ENCODE measurements at regions of chr1 and their contacts with region 1.

Region 1: GRCh38 chr1:110005971-110006370 is 21.4 kb downstream of the AHCYL1 start:
- DNase-seq: no peak
- H3K4me3 ChIP-seq: no peak overlapping the region
- H3K27ac ChIP-seq: no peak overlapping the region
- H3K4me1 ChIP-seq: peaks cover 9 to 25% (median 19%) of the 10 kb centered on the region in 4 experiments; a peak in 6 of 7 replicates
- H3K27me3 ChIP-seq: no peaks in the 10 kb centered on the region
- CTCF ChIP-seq: no peak
- EP300 ChIP-seq: no peak
- POLR2A ChIP-seq: no peak
- RAD21 ChIP-seq: no peak

Region 2: DNA sequence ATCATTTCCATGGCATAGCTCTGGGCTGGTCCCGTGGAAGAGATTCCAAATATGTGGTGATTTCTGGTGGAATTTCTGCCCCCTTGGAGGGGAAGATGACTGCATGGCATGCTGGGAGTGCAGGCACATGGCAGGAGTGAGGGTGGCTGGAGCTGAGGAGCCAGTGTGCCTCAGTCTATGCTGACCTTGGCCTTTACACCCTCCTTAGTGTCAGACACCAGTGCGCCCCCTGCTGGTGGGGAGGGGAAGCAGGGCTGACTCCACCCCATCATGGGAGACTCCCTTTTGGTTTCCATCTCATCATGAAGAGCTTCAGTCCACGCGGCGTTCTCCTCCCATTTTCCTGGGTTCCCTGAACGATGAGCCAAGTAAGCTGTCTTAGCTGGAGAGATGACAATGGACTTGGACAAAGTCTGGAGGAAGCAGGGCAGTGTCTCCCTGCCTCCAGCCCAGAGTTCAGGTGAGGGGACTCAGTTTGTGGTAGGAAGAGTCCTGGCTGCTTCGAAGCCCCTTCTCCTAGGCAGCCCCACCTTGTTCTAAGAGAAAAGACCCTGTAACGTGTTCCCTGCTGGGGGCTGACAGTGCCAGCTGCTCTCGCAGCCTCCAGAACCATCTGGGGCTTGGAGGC is 54.2 kb after region 1 on chr1:
- CTCF ChIA-PET with region 1: interaction called, 10 read pairs
- POLR2A ChIA-PET with region 1: no interaction called
- DNase-seq: peak in 1 of 2 experiments; percentile 94
- H3K4me3 ChIP-seq: no peak overlapping the region
- H3K27ac ChIP-seq: no peak overlapping the region
- H3K4me1 ChIP-seq: no peaks in the 10 kb centered on the region
- H3K27me3 ChIP-seq: peaks cover 0 to 8% (median 4%) of the 10 kb centered on the region in 4 experiments; a peak in 5 of 7 replicates
- CTCF ChIP-seq: peak; percentile 67 to 97 (median 97)
- EP300 ChIP-seq: no peak
- POLR2A ChIP-seq: no peak
- RAD21 ChIP-seq: peak in 1 of 2 experiments; percentile 38; a peak in 1 of 4 replicates

Region 3: GRCh38 chr1:110082477-110082876 is 76.5 kb after region 1 on chr1:
- CTCF ChIA-PET with region 1: no interaction called
- POLR2A ChIA-PET with region 1: no interaction called
- DNase-seq: no peak
- H3K4me3 ChIP-seq: no peak overlapping the region
- H3K27ac ChIP-seq: no peak overlapping the region
- H3K4me1 ChIP-seq: peaks cover 0 to 12% (median 8%) of the 10 kb centered on the region in 4 experiments; a peak in 6 of 7 replicates
- H3K27me3 ChIP-seq: peaks cover 54 to 70% (median 62%) of the 10 kb centered on the region in 4 experiments
- CTCF ChIP-seq: no peak
- EP300 ChIP-seq: no peak
- POLR2A ChIP-seq: no peak
- RAD21 ChIP-seq: no peak

Region 4: DNA sequence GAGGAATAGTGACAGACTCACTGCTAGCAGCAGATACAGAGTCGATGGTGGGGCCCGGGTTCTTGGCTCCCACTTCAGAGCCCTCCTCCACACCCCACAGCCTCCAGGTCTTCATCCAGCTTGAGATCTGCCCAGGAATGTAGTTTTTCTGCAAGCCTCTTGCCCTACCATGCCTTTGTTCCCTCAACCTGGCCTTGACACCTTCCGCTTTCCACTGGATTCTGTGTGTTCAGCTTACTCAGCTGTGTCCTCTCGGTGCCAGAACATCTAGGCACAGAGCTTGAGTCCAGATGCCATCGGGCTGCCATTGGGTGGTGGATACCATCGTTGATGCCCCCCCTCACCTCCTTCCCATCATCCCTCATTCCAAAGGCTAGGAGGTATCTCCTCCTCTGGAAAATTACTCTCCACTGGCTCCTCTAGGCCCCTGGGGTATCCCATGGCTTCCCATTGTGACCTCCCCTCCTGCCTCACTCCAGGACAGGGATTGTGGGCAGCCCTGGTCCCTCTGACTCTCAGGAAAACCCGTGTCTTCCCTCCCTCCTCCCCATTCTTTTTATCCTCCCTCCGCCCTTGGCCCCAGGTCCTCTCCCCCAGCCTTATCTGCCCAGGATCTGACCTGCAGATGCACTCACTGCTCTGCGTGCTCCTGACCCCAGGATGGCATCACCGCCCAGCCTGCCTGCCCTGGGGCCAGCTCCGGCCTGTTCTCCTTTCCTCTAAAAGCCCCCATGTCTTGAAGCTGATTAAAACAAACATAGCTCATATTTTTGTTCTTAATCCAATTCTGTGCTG is 92.1 kb after region 1 on chr1:
- CTCF ChIA-PET with region 1: no interaction called
- POLR2A ChIA-PET with region 1: no interaction called
- DNase-seq: no peak
- H3K4me3 ChIP-seq: no peak overlapping the region
- H3K27ac ChIP-seq: no peak overlapping the region
- H3K4me1 ChIP-seq: no peaks in the 10 kb centered on the region
- H3K27me3 ChIP-seq: no peaks in the 10 kb centered on the region; a peak in 2 of 7 replicates
- CTCF ChIP-seq: no peak
- EP300 ChIP-seq: no peak
- POLR2A ChIP-seq: no peak
- RAD21 ChIP-seq: no peak

Measured in H1 (cell line).